Mammary epithelial cell (primary cell): ENCODE measurements at regions of chr17 and their contacts with region 1.

Region 1: GRCh38 chr17:64599187-64599676 is 62.9 kb downstream of the SMURF2 start:
- DNase-seq: no peak
- H3K4me3 ChIP-seq: no peak overlapping the region
- H3K27ac ChIP-seq: no peak overlapping the region
- H3K4me1 ChIP-seq: no peaks in the 10 kb centered on the region
- H3K27me3 ChIP-seq: no peaks in the 10 kb centered on the region
- CTCF ChIP-seq: no peak

Region 2: GRCh38 chr17:64441772-64442540 is 157.3 kb before region 1 on chr17:
- CTCF ChIA-PET with region 1: no interaction called
- dilution Hi-C with region 1: no loop called
- in situ Hi-C with region 1: no loop called
- intact Hi-C with region 1: no loop called
- DNase-seq: no peak
- H3K4me3 ChIP-seq: no peak overlapping the region
- H3K27ac ChIP-seq: no peak overlapping the region
- H3K4me1 ChIP-seq: peaks cover 9% of the 10 kb centered on the region
- H3K27me3 ChIP-seq: no peaks in the 10 kb centered on the region
- CTCF ChIP-seq: no peak

Region 3: GRCh38 chr17:64506576-64507477 is 92.4 kb before region 1 on chr17 and contains the start of gene CEP95:
- CTCF ChIA-PET with region 1: interaction called, 18 read pairs
- dilution Hi-C with region 1: no loop called
- in situ Hi-C with region 1: no loop called
- intact Hi-C with region 1: no loop called
- DNase-seq: peak; percentile 99
- H3K4me3 ChIP-seq: peak within 1 kb of the TSS; percentile 82 to 100 (median 97)
- H3K27ac ChIP-seq: peak within 1 kb of the TSS; percentile 99
- H3K4me1 ChIP-seq: peaks cover 37% of the 10 kb centered on the region
- H3K27me3 ChIP-seq: no peaks in the 10 kb centered on the region
- CTCF ChIP-seq: no peak
- total RNA-seq, gene CEP95: 18.7 to 36.5 TPM

Region 4: DNA sequence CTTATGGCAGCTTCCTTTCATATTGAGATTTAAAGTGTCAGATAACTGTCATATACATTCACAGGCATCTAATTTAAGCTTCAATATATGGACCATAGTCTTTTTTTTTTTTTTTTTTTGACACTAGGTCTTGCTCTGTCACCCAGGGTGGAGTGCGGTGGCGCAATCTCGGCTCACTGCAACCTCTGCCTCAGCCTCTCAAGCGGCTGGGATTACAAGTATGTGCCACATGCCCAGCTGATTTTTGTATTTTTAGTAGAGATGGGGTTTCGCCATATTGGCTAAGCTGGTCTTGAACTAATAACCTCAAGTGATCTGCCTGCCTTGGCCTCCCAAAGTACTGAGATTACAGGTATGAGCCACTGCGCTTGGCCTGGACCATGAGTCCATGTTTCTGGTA is 78.9 kb before region 1 on chr17:
- CTCF ChIA-PET with region 1: no interaction called
- dilution Hi-C with region 1: no loop called
- in situ Hi-C with region 1: no loop called
- intact Hi-C with region 1: no loop called
- DNase-seq: no peak
- H3K4me3 ChIP-seq: no peak overlapping the region
- H3K27ac ChIP-seq: no peak overlapping the region
- H3K4me1 ChIP-seq: no peaks in the 10 kb centered on the region
- H3K27me3 ChIP-seq: no peaks in the 10 kb centered on the region
- CTCF ChIP-seq: no peak